Activated CD4-positive, alpha-beta T cell treated with anti-CD3 and anti-CD28 coated beads for 36 hours (primary cell): ENCODE measurements at regions of chr3 and their contacts with region 1.

Region 1: GRCh38 chr3:66971891-66972551 is 26.1 kb upstream of the KBTBD8 start:
- DNase-seq: peak; percentile 80
- ATAC-seq: peak; percentile 96
- H3K4me3 Mint-ChIP-seq: peak overlapping the region; percentile 69
- H3K27ac Mint-ChIP-seq: peak overlapping the region; percentile 73
- H3K4me1 Mint-ChIP-seq: peaks cover 13% of the 10 kb centered on the region
- H3K27me3 Mint-ChIP-seq: peaks cover 2% of the 10 kb centered on the region

Region 2: DNA sequence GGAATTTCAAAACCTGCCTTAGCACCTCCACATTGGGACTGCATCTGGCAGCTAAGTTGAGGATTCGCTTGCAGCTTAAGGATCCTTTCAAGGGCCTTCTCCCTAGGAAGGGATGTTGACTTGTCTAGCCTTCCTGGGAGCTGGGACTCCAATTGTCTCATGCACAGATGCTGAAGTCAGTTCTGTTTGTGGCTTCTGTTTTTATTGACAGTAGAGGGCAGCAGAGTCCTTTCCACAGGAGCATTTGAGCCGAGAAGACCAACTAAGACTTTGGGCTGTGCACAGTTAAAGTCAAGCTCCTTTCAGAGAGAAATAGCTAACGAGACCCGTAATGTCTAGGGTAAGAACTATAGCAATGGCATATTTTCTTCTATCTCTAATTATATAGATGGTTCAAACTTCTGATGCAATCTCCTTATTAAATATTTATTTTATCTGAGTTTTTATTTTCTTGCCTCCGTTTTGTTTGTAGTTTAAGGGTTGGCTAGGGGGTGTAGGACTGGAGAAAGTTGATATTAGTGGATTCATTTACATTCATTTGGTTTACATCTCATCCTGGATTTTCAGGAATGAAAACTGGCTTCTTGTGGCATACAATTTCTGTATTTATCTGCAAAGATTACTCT is 33.6 kb before region 1 on chr3:
- CTCF ChIA-PET with region 1: interaction called, 30 read pairs
- POLR2A ChIA-PET with region 1: no interaction called
- intact Hi-C with region 1: no loop called
- DNase-seq: peak; percentile 40
- ATAC-seq: peak; percentile 44
- H3K4me3 Mint-ChIP-seq: no peak overlapping the region
- H3K27ac Mint-ChIP-seq: no peak overlapping the region
- H3K4me1 Mint-ChIP-seq: no peaks in the 10 kb centered on the region
- H3K27me3 Mint-ChIP-seq: peaks cover 18% of the 10 kb centered on the region

Region 3: DNA sequence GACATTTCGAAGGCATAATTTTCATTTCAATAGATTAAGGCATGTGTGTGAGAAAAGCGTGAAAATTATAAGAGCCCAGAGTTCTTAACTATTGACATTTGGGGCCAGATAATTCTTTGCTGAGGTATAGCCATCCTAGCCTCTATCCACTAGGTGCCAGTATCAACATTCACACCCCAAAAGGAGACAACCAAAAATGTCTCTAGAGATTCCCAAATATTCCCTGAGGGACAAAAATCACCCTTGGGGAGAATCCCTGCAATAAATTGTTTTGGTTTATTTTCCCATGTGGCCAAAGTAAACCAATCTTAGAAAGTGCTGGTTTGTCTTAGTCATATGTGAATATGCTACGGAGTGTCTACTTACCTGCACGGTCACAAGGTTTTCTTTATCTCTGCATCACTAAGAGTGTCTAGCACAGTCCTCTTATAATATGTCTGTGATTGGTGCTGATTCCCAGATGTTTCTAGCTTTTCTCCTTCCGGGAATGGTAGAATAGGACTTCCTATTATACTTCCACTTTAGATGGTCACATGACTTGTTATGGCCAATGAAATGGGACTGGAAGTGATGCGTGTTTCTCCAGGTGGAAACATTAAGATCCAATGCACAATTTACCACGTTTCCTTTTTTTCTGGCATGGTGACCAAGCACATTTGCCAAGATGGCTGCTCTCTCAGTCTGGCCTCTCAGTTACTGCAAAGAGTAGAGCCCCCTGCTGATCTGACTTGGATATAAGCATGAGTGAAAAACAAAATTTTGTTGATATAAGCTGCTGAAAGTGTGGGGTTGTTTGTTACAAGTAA is 18.0 kb after region 1 on chr3:
- CTCF ChIA-PET with region 1: interaction called, 22 read pairs
- POLR2A ChIA-PET with region 1: no interaction called
- intact Hi-C with region 1: no loop called
- DNase-seq: peak; percentile 15
- ATAC-seq: peak; percentile 71
- H3K4me3 Mint-ChIP-seq: no peak overlapping the region
- H3K27ac Mint-ChIP-seq: no peak overlapping the region
- H3K4me1 Mint-ChIP-seq: no peaks in the 10 kb centered on the region
- H3K27me3 Mint-ChIP-seq: peaks cover 10% of the 10 kb centered on the region

Region 4: GRCh38 chr3:67006460-67006859 is 34.4 kb after region 1 on chr3:
- CTCF ChIA-PET with region 1: interaction called, 15 read pairs
- POLR2A ChIA-PET with region 1: no interaction called
- intact Hi-C with region 1: no loop called
- DNase-seq: no peak
- ATAC-seq: no peak
- H3K4me3 Mint-ChIP-seq: no peak overlapping the region
- H3K27ac Mint-ChIP-seq: no peak overlapping the region
- H3K4me1 Mint-ChIP-seq: peaks cover 35% of the 10 kb centered on the region
- H3K27me3 Mint-ChIP-seq: no peaks in the 10 kb centered on the region

Region 5: DNA sequence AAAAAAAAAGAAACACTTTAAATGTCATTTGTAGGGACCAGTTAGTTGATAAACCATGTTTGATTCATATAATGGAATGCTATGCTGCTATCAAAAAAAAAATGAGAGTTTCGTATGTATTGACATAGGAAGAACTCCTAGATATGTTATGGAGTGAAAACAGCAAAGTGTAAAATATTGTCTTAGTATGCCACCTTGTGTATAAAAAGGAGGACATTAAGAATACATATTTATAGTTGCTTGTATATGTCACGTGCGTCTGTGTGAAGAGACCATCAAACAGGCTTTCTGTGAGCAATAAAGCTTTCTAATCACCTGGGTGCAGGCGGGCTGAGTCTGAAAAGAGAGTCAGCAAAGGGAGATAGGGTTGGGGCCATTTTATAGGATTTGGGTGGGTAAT is 65.6 kb after region 1 on chr3:
- CTCF ChIA-PET with region 1: interaction called, 17 read pairs
- POLR2A ChIA-PET with region 1: no interaction called
- intact Hi-C with region 1: loop called (anchors 5 kb)
- DNase-seq: no peak
- ATAC-seq: no peak
- H3K4me3 Mint-ChIP-seq: no peak overlapping the region
- H3K27ac Mint-ChIP-seq: no peak overlapping the region
- H3K4me1 Mint-ChIP-seq: no peaks in the 10 kb centered on the region
- H3K27me3 Mint-ChIP-seq: no peaks in the 10 kb centered on the region

Region 6: DNA sequence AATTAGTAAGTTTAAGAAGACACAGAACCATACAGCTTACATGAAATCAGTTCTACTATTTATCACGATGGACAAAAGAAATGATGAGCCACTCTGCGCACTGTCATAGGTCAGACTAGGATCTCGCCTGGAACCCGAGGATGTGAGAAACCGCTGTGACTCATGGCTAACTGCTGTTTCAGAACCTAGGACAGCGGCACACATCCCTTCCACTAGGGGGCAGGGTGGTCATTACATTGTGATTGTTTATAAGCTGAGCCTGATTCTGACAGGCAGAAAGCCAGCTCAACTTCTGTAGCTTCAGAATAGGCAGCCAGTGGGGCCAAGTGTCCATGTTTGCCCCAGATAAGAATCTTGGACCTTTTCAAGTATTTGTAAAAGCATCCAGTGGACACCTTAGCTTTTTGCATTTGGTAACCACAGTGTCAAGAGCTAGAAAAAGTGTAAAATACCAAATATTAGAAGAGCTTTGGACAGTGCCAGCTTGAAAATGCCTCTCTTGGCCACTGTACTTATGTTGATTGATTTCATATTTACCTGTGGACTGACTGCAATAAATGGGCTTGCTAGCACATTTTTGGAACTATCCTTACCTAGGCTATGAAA is 141.9 kb after region 1 on chr3:
- CTCF ChIA-PET with region 1: interaction called, 13 read pairs
- POLR2A ChIA-PET with region 1: no interaction called
- intact Hi-C with region 1: loop called (anchors 5 kb)
- DNase-seq: peak; percentile 89
- ATAC-seq: peak; percentile 99
- H3K4me3 Mint-ChIP-seq: no peak overlapping the region
- H3K27ac Mint-ChIP-seq: no peak overlapping the region
- H3K4me1 Mint-ChIP-seq: peaks cover 5% of the 10 kb centered on the region
- H3K27me3 Mint-ChIP-seq: peaks cover 15% of the 10 kb centered on the region

Region 7: DNA sequence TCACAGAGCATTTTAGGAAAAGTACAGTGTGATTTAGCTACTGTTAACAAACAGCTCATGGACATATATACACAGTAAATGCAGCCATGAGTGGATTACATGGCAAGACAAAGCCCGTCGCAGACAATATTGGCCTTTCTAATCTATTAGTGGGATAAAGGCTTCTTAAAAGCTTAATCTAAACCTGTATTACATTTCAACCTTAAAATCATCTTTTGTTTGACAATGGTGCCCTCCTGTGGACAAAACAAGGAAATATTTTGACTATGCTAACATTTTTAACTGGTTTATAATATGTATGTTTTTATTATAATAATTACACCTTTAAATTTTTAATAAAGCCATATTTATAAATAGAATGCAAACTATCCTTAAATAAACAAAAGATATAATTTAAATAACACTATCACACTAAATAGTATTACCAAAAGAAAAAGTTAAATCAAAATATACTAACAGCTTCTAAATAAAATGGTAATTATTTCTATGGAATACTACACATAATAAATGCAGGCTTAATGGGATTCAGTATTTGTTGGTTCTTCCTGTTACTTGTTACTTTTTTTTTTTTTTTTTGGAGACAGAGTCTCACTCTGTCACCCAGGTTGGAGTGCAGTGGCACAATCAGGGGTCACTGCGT is 1921.7 kb after region 1 on chr3:
- CTCF ChIA-PET with region 1: no interaction called
- POLR2A ChIA-PET with region 1: no interaction called
- intact Hi-C with region 1: loop called in 1 of 2 experiments (anchors 5 kb)
- DNase-seq: no peak
- ATAC-seq: no peak
- H3K4me3 Mint-ChIP-seq: no peak overlapping the region
- H3K27ac Mint-ChIP-seq: no peak overlapping the region
- H3K4me1 Mint-ChIP-seq: no peaks in the 10 kb centered on the region
- H3K27me3 Mint-ChIP-seq: peaks cover under 1% of the 10 kb centered on the region